ENCODE measurements at regions of chr9 and their contacts with region 1.

Region 1: GRCh38 chr9:96449845-96450612 is at the start of gene HABP4:
- DNase-seq: peak; percentile 57
- H3K4me3 ChIP-seq: peak within 1 kb of the TSS; percentile 69
- H3K27me3 ChIP-seq: no peaks in the 10 kb centered on the region
- CTCF ChIP-seq: no peak
- polyA plus RNA-seq, gene HABP4: 9.2 and 10.2 TPM in 2 replicates

Region 2: GRCh38 chr9:96425500-96426169 is 24.4 kb before region 1 on chr9:
- CTCF ChIA-PET with region 1: no interaction called
- POLR2A ChIA-PET with region 1: interaction called, 18 read pairs
- DNase-seq: no peak
- H3K4me3 ChIP-seq: no peak overlapping the region
- H3K27me3 ChIP-seq: no peaks in the 10 kb centered on the region
- CTCF ChIP-seq: no peak

Region 3: GRCh38 chr9:96436063-96436455 is 14.0 kb before region 1 on chr9:
- CTCF ChIA-PET with region 1: interaction called, 11 read pairs
- POLR2A ChIA-PET with region 1: interaction called, 4 read pairs
- DNase-seq: no peak
- H3K4me3 ChIP-seq: no peak overlapping the region
- H3K27me3 ChIP-seq: no peaks in the 10 kb centered on the region
- CTCF ChIP-seq: no peak

Region 4: GRCh38 chr9:96674914-96675538 is 225.0 kb after region 1 on chr9:
- CTCF ChIA-PET with region 1: no interaction called
- POLR2A ChIA-PET with region 1: no interaction called
- DNase-seq: no peak
- H3K4me3 ChIP-seq: no peak overlapping the region
- H3K27me3 ChIP-seq: no peaks in the 10 kb centered on the region
- CTCF ChIP-seq: no peak

Measured in BJ (cell line).